Pancreas (tissue), 10 donors: ENCODE measurements at regions of chr4 and their contacts with region 1.

Region 1: DNA sequence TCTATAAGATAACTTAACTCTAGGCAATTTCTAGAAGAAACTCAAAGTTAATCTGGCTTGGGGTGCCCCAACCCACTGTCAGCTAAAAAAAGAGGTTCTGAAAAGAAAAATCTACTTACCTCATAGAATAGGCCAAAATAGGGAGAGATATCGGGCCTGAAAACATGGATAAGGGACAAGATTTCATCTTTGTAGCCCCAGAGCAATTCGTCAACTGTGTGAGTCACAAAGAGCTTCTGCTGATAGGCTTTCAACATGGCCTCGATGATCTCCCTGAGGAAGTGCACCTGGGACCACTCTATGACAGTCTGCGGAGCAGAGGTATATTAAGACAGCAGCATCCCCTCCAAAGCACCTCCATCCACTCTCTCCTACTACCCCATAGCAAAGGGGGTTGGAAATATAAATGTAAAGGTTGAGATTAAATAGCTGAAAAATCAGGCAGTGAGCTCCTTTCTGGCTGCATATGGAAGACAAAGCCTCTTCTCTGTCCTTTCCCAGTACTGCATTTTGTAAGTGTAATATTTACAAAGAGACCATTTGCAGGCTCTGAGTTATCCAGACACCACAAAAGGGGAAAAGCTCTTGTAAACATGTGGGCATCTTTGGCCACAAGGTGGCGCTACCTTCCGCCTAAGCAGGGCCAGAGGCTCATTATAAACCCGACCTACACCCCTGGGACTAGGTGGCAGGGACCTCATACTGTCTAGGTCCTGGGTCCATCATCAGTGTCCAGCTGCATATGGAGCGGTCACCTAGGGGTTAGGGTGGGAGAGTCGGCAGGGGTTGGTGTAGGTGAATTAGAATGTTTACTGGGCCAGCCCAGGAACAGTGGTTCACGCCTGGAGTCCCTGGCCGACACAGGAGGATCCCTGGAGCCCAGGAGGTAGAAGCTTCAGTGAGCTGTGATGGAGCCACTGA is 31.5 kb upstream of the NUP54 start:
- DNase-seq: peak; percentile 67 to 97 (median 87)
- ATAC-seq: peak; percentile 90 to 97 (median 94)
- H3K4me3 ChIP-seq: no peak overlapping the region
- H3K27ac ChIP-seq: no peak overlapping the region
- H3K4me1 ChIP-seq: peaks cover 0 to 9% (median 4%) of the 10 kb centered on the region in 3 donors
- H3K27me3 ChIP-seq: no peaks in the 10 kb centered on the region
- CTCF ChIP-seq: peak; percentile 81 to 94 (median 89)

Region 2: DNA sequence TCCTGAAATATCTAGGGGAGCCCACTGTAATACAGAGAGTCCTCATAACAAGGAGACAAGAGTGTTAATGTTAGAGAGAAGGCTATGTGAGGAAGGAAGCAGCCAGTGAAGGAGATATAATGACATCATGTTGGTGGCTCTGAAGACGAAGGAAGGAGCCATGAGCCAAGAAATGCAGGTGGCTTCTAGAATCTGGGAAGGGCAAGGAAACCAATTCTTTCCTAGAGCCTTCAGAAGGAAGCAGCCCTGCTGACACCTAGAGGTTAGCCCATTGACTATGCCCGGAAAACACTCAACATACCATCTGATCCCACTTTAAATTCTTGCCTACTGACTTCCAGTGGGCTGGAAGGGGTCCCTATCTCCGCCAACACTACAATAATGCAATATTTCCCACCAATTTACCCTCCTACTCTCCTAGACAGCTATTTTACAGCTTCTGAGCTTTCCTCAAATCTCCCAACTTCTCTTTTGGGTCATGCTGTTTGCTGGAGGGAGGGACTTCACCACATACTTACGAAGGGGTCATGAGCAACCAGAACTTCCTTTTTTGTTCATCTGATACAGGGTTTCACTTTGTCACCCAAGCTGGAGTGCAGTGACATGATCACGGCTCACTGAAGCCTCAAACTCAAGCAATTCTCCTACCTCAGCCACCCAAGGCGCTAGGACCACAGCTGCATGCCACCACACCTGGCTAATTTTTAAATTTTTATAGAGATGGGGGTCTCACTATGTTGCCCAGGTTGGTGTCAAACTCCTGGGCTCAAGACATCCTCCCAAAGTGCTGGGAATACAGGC is 481.3 kb before region 1 on chr4:
- intact Hi-C with region 1: no loop called
- DNase-seq: no peak
- ATAC-seq: peak in 2 of 4 donors; percentile 68 to 74
- H3K4me3 ChIP-seq: no peak overlapping the region
- H3K27ac ChIP-seq: peak overlapping the region in 2 of 4 donors; percentile 17 to 50
- H3K4me1 ChIP-seq: no peaks in the 10 kb centered on the region
- H3K27me3 ChIP-seq: no peaks in the 10 kb centered on the region
- CTCF ChIP-seq: no peak

Region 3: DNA sequence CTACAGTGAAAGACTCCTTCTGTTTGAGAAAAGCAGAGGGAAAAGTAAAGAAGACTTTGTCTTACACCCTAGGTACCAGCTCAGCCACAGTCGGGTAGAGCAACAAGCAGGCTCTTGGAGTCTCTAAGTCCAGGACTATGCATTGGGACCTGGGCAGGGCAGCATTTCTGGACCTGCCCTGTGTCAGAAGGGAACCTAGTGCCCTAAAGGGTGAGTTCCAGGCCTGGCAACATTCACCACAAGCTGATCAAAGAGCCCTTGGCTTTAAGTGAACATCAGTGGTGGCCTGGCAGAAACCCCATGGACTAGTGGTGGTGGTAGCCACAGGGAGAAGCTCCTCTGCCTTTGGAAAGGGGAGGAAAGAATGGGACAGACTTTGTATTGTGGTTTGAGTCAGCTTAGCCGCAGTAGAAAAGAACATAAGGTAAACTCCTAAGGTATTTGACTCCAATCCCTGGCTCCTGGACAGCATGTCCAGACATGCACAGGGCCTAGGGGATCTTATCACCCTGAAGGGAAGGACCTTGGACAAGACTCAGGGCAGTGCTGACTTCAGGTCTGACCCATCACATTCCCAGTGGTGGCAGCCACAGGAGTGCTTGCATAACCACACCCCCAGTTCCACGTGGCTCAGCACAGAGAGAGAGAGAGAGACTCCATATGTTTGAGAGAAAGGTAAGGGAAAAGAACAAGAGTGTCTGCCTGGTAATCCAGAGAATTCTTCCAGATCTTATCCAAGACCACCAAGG is 208.7 kb after region 1 on chr4:
- intact Hi-C with region 1: loop called in 1 of 3 experiments (anchors 10 kb)
- DNase-seq: no peak
- ATAC-seq: peak in 1 of 4 donors; percentile 59
- H3K4me3 ChIP-seq: no peak overlapping the region
- H3K27ac ChIP-seq: no peak overlapping the region
- H3K4me1 ChIP-seq: no peaks in the 10 kb centered on the region
- H3K27me3 ChIP-seq: no peaks in the 10 kb centered on the region
- CTCF ChIP-seq: no peak

Region 4: DNA sequence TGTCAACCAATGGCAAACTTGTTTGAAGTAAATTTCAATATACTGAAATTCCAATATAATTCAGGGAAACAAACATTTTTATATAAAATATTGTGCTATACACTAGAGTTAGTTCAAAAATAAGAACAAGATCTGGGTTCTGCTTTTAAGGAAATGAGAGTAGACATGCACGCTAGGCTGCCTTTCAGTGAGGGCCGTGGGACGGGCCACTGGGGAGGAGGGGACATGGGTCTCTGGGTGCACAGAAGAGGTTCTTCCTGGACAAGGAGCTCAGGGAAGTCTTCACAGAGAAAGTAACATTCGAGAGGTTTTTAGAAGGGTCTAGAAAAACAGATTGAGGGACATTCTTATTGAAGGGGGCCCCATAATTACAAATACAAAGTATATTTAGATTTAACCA is 319.8 kb after region 1 on chr4:
- intact Hi-C with region 1: loop called in 1 of 3 experiments (anchors 10 kb)
- DNase-seq: no peak
- ATAC-seq: no peak
- H3K4me3 ChIP-seq: no peak overlapping the region
- H3K27ac ChIP-seq: no peak overlapping the region
- H3K4me1 ChIP-seq: peaks cover 4 to 8% (median 6%) of the 10 kb centered on the region in 3 donors
- H3K27me3 ChIP-seq: no peaks in the 10 kb centered on the region
- CTCF ChIP-seq: no peak